GM13976 (cell line): ENCODE measurements at regions of chr3 and their contacts with region 1.

Region 1: DNA sequence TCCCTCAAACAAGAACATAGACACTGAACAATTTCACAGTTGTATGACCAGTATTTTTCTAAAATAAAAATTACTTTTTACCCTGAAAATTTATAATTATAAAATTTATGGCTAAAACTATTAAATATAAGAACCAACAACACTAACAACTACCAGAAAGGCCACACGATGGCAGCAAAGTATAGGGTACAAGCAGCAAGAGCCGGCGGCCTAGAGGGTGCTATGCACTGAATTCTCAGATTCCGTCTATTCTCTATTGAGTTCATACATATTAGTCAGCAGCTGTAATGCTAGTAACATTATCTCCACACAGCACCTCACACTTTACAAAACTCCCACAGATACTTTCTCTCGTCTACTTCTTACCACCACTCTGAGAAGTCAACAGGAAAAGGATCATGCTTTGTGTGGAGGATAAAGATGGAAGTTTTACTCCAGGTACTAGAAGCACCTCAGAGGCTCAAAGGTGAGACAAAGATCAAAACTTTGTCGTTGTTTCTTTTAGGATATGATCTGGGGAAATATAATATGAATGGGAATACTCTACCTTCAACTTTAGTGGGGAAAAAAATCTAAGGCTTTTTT is 160.5 kb downstream of the FGF12 start:
- DNase-seq: peak; percentile 55
- CTCF ChIP-seq: peak; percentile 39

Region 2: DNA sequence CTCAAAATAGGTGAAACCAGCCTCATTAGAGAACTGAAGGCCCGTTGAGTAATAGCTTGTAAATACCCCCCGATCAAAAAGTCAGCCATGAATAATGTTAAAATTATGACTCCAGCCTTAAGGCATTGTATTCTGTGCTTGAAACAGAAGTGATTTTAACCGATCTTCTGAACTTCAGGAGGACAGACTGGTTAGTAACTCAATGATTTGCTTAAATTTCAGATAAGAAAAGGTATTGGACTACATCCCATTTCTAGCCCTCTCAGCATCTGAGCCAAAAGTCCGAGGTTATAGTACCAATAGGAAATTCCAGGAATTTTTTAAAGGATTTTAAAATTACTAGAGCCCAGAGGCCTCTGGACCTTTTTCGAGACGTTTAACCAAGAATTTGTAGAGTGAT is 228.2 kb after region 1 on chr3:
- in situ Hi-C with region 1: loop called (anchors 10 kb)
- DNase-seq: no peak
- CTCF ChIP-seq: no peak